Pancreas (tissue), 10 donors: ENCODE measurements at regions of chr21 and their contacts with region 1.

Region 1: DNA sequence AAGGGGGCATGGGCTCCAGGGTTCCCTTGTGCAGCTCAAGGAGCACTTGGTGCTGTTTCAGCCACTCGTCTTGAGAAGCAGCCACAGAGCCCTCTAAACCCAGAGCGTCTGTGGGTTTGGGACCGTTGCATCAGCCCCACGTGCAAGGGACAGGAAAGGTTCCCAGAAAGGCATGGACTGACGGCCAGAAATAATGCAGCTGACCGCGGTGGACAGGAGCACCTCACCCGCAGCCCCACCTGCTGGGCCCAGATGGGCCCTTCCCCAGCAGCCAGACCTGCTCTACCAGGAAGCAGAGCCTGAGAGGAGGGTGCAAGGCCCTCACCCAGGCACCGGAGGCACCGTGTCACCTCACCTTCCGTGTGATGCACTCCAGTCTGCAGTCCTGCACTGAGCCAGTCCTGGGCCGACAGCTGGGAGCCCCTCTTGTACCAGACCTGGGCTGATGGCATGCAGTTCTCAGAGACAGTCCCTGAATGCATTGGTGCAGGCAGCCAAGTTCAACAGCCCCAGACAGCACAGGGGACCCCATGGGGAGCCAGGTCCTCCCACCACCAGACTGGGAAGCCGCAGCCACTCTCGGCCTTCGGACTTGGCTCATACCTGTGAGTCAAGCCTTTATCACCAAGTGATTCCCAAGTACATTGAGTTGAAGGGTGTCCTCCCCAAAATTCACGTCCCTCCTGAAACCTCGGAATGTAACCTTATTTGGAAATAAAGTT is 4.8 kb upstream of the TFF3 start:
- DNase-seq: peak in 3 of 6 donors; percentile 42 to 56 (median 55)
- ATAC-seq: peak; percentile 61 to 87 (median 67)
- H3K4me3 ChIP-seq: no peak overlapping the region
- H3K27ac ChIP-seq: no peak overlapping the region
- H3K4me1 ChIP-seq: no peaks in the 10 kb centered on the region
- H3K27me3 ChIP-seq: no peaks in the 10 kb centered on the region
- CTCF ChIP-seq: no peak

Region 2: DNA sequence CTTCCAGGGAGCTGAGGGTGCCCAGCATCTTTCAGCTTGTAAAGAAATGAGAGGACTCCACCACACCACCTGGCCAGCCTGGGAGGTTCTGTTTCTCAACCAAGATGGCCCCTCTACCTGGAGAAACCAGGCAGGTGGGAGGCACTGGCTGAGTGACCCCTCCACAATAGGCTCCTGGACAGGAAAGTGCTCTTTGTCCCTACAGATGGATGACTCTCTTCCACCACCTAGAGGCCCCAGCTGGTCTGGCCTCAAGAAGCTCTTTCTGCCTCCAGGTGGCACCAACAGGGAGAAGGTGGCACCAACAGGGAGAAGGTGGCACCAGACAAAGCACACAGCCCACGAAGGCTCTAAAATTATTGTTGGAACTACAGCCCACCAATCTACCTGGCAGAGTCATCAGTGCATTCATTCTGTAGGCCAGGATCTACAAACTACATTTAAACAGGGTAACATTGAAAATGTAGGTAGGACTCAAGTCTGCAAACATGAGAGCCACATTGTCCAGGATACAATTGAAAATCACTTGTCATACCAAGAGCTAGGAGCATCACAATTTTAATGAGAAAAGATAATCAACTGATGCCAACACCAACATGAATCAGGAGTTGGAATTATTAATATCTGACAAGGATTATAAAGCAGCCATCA is 61.4 kb after region 1 on chr21:
- intact Hi-C with region 1: loop called in 1 of 3 experiments (anchors 10 kb)
- DNase-seq: peak in 5 of 6 donors; percentile 56 to 78 (median 69)
- ATAC-seq: peak; percentile 78 to 94 (median 88)
- H3K4me3 ChIP-seq: no peak overlapping the region
- H3K27ac ChIP-seq: no peak overlapping the region
- H3K4me1 ChIP-seq: no peaks in the 10 kb centered on the region
- H3K27me3 ChIP-seq: no peaks in the 10 kb centered on the region
- CTCF ChIP-seq: peak; percentile 60 to 74 (median 64)